ENCODE measurements at regions of chr18 and their contacts with region 1.

Region 1: DNA sequence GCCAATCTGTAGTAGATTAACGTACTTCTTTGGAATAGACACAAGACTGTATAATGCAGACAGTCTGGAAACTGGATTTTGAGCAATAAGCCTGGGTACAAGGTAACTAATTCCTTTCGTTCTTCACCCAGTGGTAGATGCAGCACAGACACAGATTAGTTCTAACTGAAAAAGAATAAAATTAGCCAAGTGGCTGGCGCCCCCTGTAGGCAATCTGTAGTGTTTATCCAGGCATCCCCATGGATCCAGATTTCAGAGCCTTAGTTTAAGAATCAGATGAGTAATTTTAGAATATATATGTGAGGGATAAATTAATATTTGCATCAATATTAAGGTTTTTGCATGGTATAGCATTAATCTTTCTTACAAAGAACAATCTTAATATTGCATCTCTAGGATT is 563.9 kb downstream of the DCC start:
- DNase-seq: peak; percentile 85
- H3K4me3 ChIP-seq: no peak overlapping the region
- H3K27ac ChIP-seq: no peak overlapping the region
- H3K4me1 ChIP-seq: peaks cover 25% of the 10 kb centered on the region
- H3K27me3 ChIP-seq: no peaks in the 10 kb centered on the region
- CTCF ChIP-seq: peak; percentile 93

Region 2: GRCh38 chr18:52723550-52723970 is 180.3 kb before region 1 on chr18:
- CTCF ChIA-PET with region 1: no interaction called
- POLR2A ChIA-PET with region 1: no interaction called
- intact Hi-C with region 1: loop called (anchors 10 kb)
- DNase-seq: no peak
- H3K4me3 ChIP-seq: peak overlapping the region; percentile 18
- H3K27ac ChIP-seq: peak overlapping the region; percentile 85
- H3K4me1 ChIP-seq: peaks cover 45% of the 10 kb centered on the region
- H3K27me3 ChIP-seq: no peaks in the 10 kb centered on the region
- CTCF ChIP-seq: no peak

Region 3: DNA sequence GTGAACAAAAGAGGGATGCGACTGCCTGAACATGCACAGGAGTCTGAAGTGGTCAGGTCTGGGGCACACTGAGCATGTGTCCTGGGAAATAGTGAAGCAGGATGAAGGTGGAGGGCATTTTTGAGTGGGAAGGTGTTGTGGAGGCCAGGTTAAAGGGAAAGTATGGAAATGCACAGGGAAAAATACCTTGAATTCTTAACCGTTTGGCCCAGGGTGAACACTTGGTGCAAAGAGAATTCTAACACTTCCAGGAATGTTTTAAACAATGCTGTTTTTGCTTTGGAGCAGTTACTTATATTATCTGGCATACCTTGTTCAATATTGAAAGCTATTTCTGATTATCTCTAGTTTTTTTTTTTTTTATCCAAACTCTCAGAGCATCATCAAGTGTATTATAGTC is 59.6 kb after region 1 on chr18:
- CTCF ChIA-PET with region 1: no interaction called
- POLR2A ChIA-PET with region 1: no interaction called
- intact Hi-C with region 1: no loop called
- DNase-seq: no peak
- H3K4me3 ChIP-seq: no peak overlapping the region
- H3K27ac ChIP-seq: no peak overlapping the region
- H3K4me1 ChIP-seq: peaks cover 10% of the 10 kb centered on the region
- H3K27me3 ChIP-seq: no peaks in the 10 kb centered on the region
- CTCF ChIP-seq: no peak